Breast epithelium (tissue), 4 donors: ENCODE measurements at regions of chr12 and their contacts with region 1.

Region 1: DNA sequence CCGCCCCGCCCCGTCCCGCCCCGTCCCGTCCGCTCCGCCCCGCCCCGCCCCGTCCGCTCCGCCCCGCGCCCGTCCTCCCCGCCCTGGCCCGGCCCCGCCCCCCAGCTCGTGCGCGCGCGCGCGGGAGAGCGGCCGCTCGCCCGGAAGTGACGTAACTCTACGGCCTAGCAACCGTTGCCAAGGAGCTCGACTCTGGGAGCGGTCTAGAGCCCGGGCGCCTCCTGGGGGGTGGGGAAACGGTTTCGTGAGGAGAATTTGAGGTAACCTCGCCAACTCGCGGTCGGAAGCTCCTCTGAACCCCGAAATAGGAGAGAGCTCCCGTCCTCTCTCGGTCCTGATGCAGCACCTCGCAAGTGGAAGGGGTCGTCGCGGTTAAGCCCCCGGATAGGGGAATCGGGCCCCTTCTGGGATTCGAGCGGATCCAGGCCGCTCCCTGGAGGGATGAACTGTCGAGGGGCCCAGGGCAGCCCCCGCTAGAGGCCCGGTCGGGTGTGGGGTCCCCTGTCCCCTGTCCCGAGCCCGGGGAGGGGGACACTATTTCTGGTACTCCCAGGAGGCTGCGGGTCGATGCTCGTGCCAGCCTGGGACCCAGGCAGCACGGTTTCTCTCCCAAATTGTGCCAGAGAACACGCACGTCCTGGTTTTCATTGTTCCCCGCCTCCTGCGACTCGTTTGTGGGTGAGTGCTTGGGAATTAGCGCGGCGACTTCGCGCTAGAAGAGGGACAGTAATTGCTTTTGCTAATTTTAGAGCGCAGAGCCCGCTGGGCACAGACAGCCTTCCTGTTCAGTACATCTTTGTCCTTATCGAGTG is at the start of gene IFT81:
- DNase-seq: peak; percentile 93 to 95
- H3K4me3 ChIP-seq: peak within 1 kb of the TSS; percentile 75 to 95 (median 83)
- H3K27ac ChIP-seq: peak within 1 kb of the TSS; percentile 91 to 96
- H3K4me1 ChIP-seq: peaks cover 5 to 7% of the 10 kb centered on the region in 2 donors
- H3K27me3 ChIP-seq: no peaks in the 10 kb centered on the region
- CTCF ChIP-seq: no peak
- POLR2A ChIP-seq: peak; percentile 38
- total RNA-seq, gene IFT81: 9.4 to 27.1 (median 19.0) TPM

Region 2: DNA sequence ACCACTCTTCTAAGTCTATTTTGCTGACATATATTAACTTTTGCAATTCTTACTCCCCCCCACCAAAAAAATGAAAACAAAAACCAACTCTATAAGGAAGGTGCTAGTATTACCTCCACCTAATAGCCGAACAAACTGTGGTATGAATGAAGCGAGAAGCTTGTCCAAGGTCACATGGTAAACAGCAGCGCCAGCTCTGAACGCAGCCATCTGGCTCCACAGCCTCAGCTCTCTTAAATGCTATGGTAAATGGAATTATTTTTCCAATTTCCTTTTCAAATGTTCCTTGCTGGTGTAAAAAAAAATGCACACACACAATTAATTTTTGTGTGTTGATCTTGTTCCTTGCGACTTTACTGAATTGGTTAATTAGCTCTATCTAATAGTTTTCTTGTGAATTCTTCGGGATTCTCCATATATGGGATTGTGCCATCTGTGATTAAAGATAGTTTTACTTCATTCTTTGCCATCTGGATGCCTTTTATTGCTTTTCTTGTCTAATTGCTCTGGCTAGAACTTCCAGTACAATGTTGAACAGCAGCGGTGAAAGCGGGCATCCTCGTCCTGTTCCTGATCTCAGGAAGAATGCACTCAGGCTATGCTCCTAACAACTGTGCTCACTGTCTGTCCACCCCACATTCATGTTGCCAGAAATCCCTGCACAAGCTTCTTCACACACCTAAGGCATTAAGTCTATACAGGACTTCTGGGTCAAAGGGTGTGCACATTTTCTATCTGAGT is 65.3 kb before region 1 on chr12:
- intact Hi-C with region 1: loop called (anchors 2 kb)
- DNase-seq: no peak
- H3K4me3 ChIP-seq: no peak overlapping the region
- H3K27ac ChIP-seq: no peak overlapping the region
- H3K4me1 ChIP-seq: no peaks in the 10 kb centered on the region
- H3K27me3 ChIP-seq: no peaks in the 10 kb centered on the region
- CTCF ChIP-seq: no peak
- POLR2A ChIP-seq: no peak

Region 3: DNA sequence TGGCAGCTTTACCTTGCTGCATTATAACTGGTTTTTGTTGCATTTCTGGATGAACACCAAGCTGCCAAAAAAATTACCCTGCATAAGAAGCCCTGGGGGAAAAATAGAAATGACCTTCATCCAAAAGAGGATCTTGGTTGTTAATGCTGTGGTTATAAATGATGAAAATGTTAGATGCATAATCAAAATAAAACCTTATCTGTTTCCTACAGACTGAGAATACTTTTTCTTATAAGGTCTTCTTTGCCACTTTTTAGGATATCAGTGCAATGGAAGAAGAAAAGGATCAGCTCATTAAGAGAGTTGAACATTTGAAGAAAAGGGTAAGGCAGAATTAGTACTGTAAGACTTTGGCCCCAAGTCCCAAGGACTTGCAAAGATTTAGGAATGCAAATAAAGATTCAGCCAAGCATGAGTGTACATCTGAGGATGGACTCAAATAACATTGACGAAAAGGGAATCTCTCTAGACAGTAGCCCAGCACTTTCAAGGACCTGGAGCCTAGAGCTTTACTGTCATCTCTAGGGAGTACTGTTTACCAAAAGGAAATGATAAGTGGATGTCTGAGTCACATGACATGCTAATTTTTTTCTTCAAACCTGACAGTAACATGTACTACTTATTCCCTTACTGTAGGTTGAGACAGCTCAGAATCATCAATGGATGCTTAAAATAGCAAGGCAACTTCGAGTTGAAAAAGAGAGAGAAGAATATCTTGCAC is 10.5 kb after region 1 on chr12:
- intact Hi-C with region 1: no loop called
- DNase-seq: no peak
- H3K4me3 ChIP-seq: no peak overlapping the region
- H3K27ac ChIP-seq: no peak overlapping the region
- H3K4me1 ChIP-seq: no peaks in the 10 kb centered on the region
- H3K27me3 ChIP-seq: no peaks in the 10 kb centered on the region
- CTCF ChIP-seq: no peak
- POLR2A ChIP-seq: no peak